Transverse colon (tissue), 4 donors: ENCODE measurements at regions of chr15 and their contacts with region 1.

Region 1: GRCh38 chr15:51459406-51459805 is 118.0 kb downstream of the GLDN start:
- DNase-seq: no peak
- H3K4me3 ChIP-seq: no peak overlapping the region
- H3K27ac ChIP-seq: no peak overlapping the region
- H3K4me1 ChIP-seq: no peaks in the 10 kb centered on the region
- H3K27me3 ChIP-seq: no peaks in the 10 kb centered on the region
- CTCF ChIP-seq: no peak
- EP300 ChIP-seq: no peak
- POLR2A ChIP-seq: no peak

Region 2: GRCh38 chr15:51425517-51426367 is 33.7 kb before region 1 on chr15:
- in situ Hi-C with region 1: no loop called
- intact Hi-C with region 1: no loop called
- DNase-seq: no peak
- H3K4me3 ChIP-seq: no peak overlapping the region
- H3K27ac ChIP-seq: no peak overlapping the region
- H3K4me1 ChIP-seq: no peaks in the 10 kb centered on the region
- H3K27me3 ChIP-seq: no peaks in the 10 kb centered on the region
- CTCF ChIP-seq: no peak
- EP300 ChIP-seq: no peak
- POLR2A ChIP-seq: no peak

Region 3: DNA sequence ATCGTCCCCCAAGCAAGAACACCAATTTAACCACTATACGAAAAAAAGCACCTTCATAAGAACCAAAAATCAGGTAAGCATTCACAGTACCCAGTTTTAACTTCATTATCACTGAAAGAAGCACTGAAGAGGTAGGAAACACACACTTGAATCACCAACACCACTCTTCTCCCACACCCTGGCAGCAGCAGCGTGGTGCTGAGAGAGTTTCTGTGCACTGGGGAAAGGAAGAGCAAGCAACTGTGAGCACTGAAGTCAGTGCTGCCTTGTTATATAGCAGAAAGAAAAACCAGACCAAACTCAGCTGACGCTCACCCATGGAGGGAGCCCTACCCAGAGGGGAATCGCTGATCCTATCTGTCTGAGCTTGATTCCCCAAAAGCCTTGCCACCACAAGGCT is 65.0 kb after region 1 on chr15:
- in situ Hi-C with region 1: no loop called
- intact Hi-C with region 1: loop called (anchors 2 kb)
- DNase-seq: no peak
- H3K4me3 ChIP-seq: no peak overlapping the region
- H3K27ac ChIP-seq: no peak overlapping the region
- H3K4me1 ChIP-seq: no peaks in the 10 kb centered on the region
- H3K27me3 ChIP-seq: no peaks in the 10 kb centered on the region
- CTCF ChIP-seq: no peak
- EP300 ChIP-seq: no peak
- POLR2A ChIP-seq: no peak

Region 4: GRCh38 chr15:51622604-51623370 is 163.4 kb after region 1 on chr15 and contains the start of gene DMXL2:
- in situ Hi-C with region 1: no loop called
- intact Hi-C with region 1: no loop called
- DNase-seq: peak; percentile 82
- H3K4me3 ChIP-seq: peak within 1 kb of the TSS; percentile 40 to 88 (median 75)
- H3K27ac ChIP-seq: peak within 1 kb of the TSS; percentile 87 to 92 (median 90)
- H3K4me1 ChIP-seq: peaks cover 0 to 34% (median 20%) of the 10 kb centered on the region in 4 donors
- H3K27me3 ChIP-seq: no peaks in the 10 kb centered on the region
- CTCF ChIP-seq: no peak
- EP300 ChIP-seq: no peak
- POLR2A ChIP-seq: peak; percentile 47
- total RNA-seq, gene DMXL2: 35.8 to 75.9 (median 56.0) TPM